OCI-LY7 (cell line): ENCODE measurements at regions of chr1 and their contacts with region 1.

Region 1: GRCh38 chr1:154943649-154944400 is 7.3 kb upstream of the PMVK start:
- DNase-seq: peak; percentile 67
- H3K4me3 ChIP-seq: peak overlapping the region; percentile 67
- H3K27ac ChIP-seq: peak overlapping the region; percentile 98
- H3K4me1 ChIP-seq: peaks cover 69% of the 10 kb centered on the region
- CTCF ChIP-seq: peak; percentile 99

Region 2: GRCh38 chr1:154925335-154926170 is 18.3 kb before region 1 on chr1:
- CTCF ChIA-PET with region 1: no interaction called
- POLR2A ChIA-PET with region 1: no interaction called
- intact Hi-C with region 1: no loop called
- DNase-seq: no peak
- H3K4me3 ChIP-seq: no peak overlapping the region
- H3K27ac ChIP-seq: no peak overlapping the region
- H3K4me1 ChIP-seq: no peaks in the 10 kb centered on the region
- CTCF ChIP-seq: no peak

Region 3: DNA sequence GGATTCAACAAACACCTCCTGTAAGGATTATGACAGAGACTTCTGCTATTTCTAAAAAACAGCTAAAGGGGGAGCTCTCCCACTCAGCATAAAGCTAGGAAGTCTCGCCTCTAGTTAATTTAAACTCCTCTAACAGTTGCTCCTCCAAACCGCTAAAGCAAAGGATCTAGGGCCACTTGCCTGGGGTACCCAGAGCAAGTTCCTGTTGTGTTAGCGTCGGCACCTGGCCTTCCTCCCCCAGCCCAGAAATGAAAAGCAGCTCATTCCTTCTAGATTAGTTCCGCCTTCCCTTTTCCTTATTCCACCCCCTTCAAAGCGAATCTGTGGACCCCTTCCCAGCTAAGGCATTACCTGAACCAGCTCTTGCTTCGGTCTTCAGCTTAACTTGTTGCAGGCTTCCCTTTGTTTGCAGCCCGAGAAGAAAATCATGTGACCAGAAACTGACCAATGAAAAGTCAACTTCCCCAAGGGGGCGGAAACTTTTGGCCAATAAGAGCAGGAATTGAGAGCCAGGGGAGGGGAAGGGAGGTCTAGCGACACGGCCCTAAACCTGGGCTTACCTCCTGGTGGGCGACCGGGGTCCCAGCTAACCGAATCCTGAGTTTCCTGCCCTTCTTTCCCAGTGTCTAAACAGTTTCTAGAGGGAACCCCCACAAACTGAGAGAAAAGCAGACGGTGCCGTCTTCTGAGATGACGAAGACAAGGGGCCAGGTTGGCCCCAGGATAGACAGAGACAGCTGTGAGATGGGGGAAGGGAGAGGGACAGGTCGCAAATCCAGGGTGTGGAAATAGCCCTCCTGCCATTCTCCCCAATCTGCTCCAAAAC is 12.1 kb after region 1 on chr1 and contains the start of gene PBXIP1:
- CTCF ChIA-PET with region 1: interaction called, 13 read pairs
- POLR2A ChIA-PET with region 1: no interaction called
- intact Hi-C with region 1: no loop called
- DNase-seq: peak; percentile 92
- H3K4me3 ChIP-seq: peak within 1 kb of the TSS; percentile 72
- H3K27ac ChIP-seq: peak within 1 kb of the TSS; percentile 87
- H3K4me1 ChIP-seq: peaks cover 69% of the 10 kb centered on the region
- CTCF ChIP-seq: peak; percentile 65
- total RNA-seq, gene PBXIP1: 23.8 and 26.6 TPM in 2 replicates